WTC11 (cell line): ENCODE measurements at regions of chr14 and their contacts with region 1.

Region 1: GRCh38 chr14:22986508-22987054 is 4.2 kb upstream of the AJUBA start:
- DNase-seq: peak; percentile 95
- ATAC-seq: peak; percentile 57
- H3K4me3 Mint-ChIP-seq: no peak overlapping the region
- H3K27ac Mint-ChIP-seq: no peak overlapping the region
- H3K4me1 Mint-ChIP-seq: peaks cover 5% of the 10 kb centered on the region
- H3K27me3 Mint-ChIP-seq: no peaks in the 10 kb centered on the region; the same call in 1 of the 2 replicates
- CTCF ChIP-seq: peak; percentile 83

Region 2: GRCh38 chr14:22929104-22929847 is 57.3 kb before region 1 on chr14 and contains the start of gene PRMT5:
- CTCF ChIA-PET with region 1: interaction called, 43 read pairs
- POLR2A ChIA-PET with region 1: interaction called, 18 read pairs
- DNase-seq: peak; percentile 97
- ATAC-seq: peak; percentile 96
- H3K4me3 Mint-ChIP-seq: no peak within 1 kb of the TSS
- H3K27ac Mint-ChIP-seq: no peak within 1 kb of the TSS; the same call in 1 of the 2 replicates
- H3K4me1 Mint-ChIP-seq: peaks cover 7% of the 10 kb centered on the region
- H3K27me3 Mint-ChIP-seq: no peaks in the 10 kb centered on the region
- CTCF ChIP-seq: no peak
- total RNA-seq, gene PRMT5: 119 to 124 TPM (median 123 TPM) in 3 replicates

Region 3: DNA sequence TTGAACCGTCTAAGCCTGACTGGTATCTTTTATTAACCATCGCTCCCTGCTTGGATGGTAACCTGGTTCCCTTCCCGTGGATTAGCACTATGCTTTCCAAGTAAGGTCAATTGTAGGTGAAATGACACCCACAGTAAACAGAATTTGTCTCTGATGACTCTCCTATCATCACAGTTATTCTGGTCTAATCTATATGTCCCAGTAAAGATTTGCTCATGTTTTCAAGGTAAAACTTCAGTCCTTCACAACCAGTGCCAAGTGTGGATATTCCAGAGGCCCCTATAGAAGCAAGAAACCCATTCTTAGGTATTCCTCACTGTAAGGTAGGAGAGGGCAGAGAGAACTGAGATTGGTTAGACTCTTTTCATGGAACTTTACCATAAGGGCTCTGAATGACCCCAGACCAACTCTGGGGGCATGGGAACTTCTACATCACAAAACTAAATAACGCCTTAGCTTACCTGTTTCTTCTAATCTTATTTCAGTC is 19.8 kb before region 1 on chr14:
- CTCF ChIA-PET with region 1: interaction called, 51 read pairs
- POLR2A ChIA-PET with region 1: interaction called, 3 read pairs
- DNase-seq: no peak
- ATAC-seq: no peak
- H3K4me3 Mint-ChIP-seq: no peak overlapping the region
- H3K27ac Mint-ChIP-seq: no peak overlapping the region; the same call in 1 of the 2 replicates
- H3K4me1 Mint-ChIP-seq: no peaks in the 10 kb centered on the region
- H3K27me3 Mint-ChIP-seq: no peaks in the 10 kb centered on the region
- CTCF ChIP-seq: no peak

Region 4: DNA sequence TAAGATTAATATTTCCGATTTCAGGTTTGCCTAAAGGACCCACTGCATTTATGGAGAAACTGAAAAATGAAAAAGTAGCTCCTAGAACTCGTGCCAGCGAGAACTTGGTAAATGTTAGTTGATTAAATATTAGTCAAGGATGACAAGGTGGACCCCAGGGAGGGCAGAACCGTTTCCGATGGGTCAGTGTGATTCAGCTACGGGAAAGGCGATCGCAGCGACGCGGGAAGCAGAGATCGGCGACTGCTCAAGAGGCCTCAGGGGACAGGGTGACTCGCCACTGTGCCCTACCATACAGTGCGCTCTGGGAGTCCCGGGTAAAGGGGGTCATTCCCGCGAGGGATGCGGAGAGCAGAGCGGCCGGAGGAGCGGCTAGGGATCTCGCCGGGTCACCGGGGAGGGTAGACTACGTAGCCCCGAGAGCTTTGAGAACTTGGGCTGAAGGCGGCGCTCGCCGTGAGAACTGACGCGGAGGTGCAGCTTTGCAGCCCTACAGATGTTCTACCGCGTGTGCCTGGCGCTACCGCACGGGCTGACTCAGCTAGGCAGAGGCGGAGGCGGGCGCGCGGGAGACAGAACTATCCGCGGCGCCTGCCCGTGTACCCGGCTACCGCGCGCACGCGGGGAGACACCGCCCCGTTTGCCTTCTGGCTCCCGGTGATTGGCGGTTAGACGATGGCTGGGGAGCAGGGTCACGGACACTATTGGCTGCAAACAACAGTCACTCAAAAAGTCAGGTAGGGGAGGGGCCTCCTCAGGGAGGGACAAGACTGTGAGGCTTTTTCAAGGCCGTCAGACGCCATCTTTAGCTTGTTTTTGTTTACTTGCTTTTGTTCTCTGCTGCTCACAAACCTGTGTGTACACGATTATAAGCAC is 20.2 kb after region 1 on chr14:
- CTCF ChIA-PET with region 1: interaction called, 64 read pairs
- POLR2A ChIA-PET with region 1: interaction called, 23 read pairs
- DNase-seq: peak; percentile 96
- ATAC-seq: peak; percentile 97
- H3K4me3 Mint-ChIP-seq: peak overlapping the region; percentile 91
- H3K27ac Mint-ChIP-seq: peak overlapping the region; percentile 100
- H3K4me1 Mint-ChIP-seq: peaks cover 31% of the 10 kb centered on the region
- H3K27me3 Mint-ChIP-seq: no peaks in the 10 kb centered on the region
- CTCF ChIP-seq: no peak

Region 5: GRCh38 chr14:23041729-23042128 is 55.1 kb after region 1 on chr14:
- CTCF ChIA-PET with region 1: interaction called, 15 read pairs
- POLR2A ChIA-PET with region 1: no interaction called
- DNase-seq: no peak
- ATAC-seq: no peak
- H3K4me3 Mint-ChIP-seq: no peak overlapping the region
- H3K27ac Mint-ChIP-seq: no peak overlapping the region
- H3K4me1 Mint-ChIP-seq: peaks cover 5% of the 10 kb centered on the region; the same call in 1 of the 2 replicates
- H3K27me3 Mint-ChIP-seq: no peaks in the 10 kb centered on the region
- CTCF ChIP-seq: no peak

Region 6: DNA sequence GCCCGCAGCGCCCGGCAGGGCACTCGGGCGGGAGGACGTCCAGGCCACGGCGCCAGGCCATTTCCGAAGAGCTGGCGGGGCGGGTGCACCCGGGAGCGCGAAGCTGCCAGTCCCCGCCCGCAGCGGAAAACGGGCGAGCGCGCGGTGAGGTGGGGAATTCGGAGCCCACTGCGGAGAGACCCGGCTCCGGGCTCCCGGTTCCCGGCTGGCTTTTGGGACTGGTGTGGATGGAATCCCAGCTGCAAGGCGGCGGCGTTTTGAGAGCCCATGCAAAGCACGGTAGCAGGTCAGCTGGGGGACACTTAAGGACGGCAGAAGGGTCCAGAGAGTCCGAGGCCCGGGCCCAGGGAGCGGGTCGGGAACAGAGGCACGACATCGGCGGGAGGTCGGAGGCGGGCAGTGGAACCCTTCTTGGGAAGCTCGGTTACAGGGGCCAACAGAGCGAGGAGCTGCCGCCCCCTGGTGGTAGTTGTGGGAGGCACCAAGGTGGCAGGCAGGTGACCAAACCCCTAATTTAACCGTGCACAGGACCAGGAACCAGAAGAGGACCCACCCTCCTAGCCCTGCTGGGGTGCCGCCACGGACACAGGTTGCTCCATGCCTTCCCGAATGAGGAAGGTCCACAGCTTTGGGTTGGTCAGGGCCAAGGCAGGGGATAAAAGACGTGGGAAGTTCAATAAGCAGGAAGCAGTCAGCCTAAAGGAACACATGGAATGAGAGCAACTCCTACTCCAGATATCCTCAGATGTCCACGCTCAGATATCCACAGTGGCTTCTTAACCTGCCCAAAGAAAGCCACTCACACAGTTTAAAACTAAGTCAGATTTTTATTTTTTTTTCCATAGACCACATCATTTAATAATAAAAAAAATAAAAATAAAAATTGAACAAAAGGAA is 71.4 kb after region 1 on chr14:
- CTCF ChIA-PET with region 1: interaction called, 224 read pairs
- POLR2A ChIA-PET with region 1: interaction called, 5 read pairs
- DNase-seq: peak; percentile 96
- ATAC-seq: peak; percentile 66
- H3K4me3 Mint-ChIP-seq: peak overlapping the region; percentile 83
- H3K27ac Mint-ChIP-seq: peak overlapping the region; percentile 91
- H3K4me1 Mint-ChIP-seq: peaks cover 12% of the 10 kb centered on the region
- H3K27me3 Mint-ChIP-seq: peaks cover 5% of the 10 kb centered on the region; the same call in 1 of the 2 replicates
- CTCF ChIP-seq: peak; percentile 97